CD4-positive, alpha-beta memory T cell (primary cell): ENCODE measurements at regions of chr14 and their contacts with region 1.

Region 1: DNA sequence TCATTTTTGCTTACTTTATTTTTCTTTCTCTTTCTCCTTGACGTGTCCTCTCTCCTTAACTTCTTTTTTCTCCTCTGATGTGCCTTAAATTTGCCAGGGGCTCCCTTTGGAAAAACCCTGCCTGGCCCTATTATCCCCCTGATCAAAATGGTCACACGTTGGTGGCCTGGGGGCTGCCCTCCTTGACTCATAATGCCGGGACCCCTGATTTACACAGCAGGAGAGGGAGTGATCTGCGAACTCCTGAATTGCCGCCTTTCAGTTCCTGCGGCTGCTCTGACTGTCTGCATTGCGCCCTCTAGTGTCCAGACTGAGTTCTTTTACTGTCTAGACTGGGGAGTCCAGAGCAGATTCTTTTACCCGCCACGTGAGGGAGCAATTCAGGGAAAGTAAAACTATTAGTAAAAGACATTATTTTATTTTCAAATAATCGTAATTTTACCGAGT is 44.8 kb upstream of the GZMB start:
- DNase-seq: peak; percentile 79 to 83 (median 81)
- H3K4me3 ChIP-seq: no peak overlapping the region
- H3K4me3 Mint-ChIP-seq: peak overlapping the region; percentile 71 to 91 (median 80)
- H3K27ac ChIP-seq: no peak overlapping the region
- H3K27ac Mint-ChIP-seq: peak overlapping the region; percentile 48 to 95 (median 79)
- H3K4me1 ChIP-seq: peaks cover 14% of the 10 kb centered on the region
- H3K4me1 Mint-ChIP-seq: peaks cover 22 to 50% (median 34%) of the 10 kb centered on the region in 4 donors
- H3K27me3 ChIP-seq: no peaks in the 10 kb centered on the region
- H3K27me3 Mint-ChIP-seq: peaks cover 1 to 8% of the 10 kb centered on the region in 2 donors

Region 2: GRCh38 chr14:24442273-24443052 is 236.4 kb before region 1 on chr14 and contains the start of gene SDR39U1:
- CTCF ChIA-PET with region 1: no interaction called
- POLR2A ChIA-PET with region 1: interaction called, 5 read pairs
- intact Hi-C with region 1: loop called (anchors 5 kb)
- DNase-seq: peak; percentile 95 to 99 (median 98)
- H3K4me3 ChIP-seq: peak within 1 kb of the TSS; percentile 73 to 85
- H3K4me3 Mint-ChIP-seq: peak within 1 kb of the TSS; percentile 87 to 97 (median 92)
- H3K27ac ChIP-seq: peak within 1 kb of the TSS; percentile 93
- H3K27ac Mint-ChIP-seq: peak within 1 kb of the TSS; percentile 93 to 99 (median 99)
- H3K4me1 ChIP-seq: peaks cover 27% of the 10 kb centered on the region
- H3K4me1 Mint-ChIP-seq: peaks cover 20 to 57% (median 41%) of the 10 kb centered on the region in 4 donors
- H3K27me3 ChIP-seq: no peaks in the 10 kb centered on the region
- H3K27me3 Mint-ChIP-seq: no peaks in the 10 kb centered on the region
- total RNA-seq, gene SDR39U1: 102 to 109 TPM

Region 3: GRCh38 chr14:24605435-24606190 is 73.2 kb before region 1 on chr14:
- CTCF ChIA-PET with region 1: interaction called, 31 read pairs
- POLR2A ChIA-PET with region 1: interaction called, 7 read pairs
- intact Hi-C with region 1: loop called (anchors 1 kb)
- DNase-seq: peak; percentile 41 to 51 (median 50)
- H3K4me3 ChIP-seq: no peak overlapping the region
- H3K4me3 Mint-ChIP-seq: peak overlapping the region in 2 of 8 donors; percentile 36 to 59
- H3K27ac ChIP-seq: no peak overlapping the region
- H3K27ac Mint-ChIP-seq: peak overlapping the region in 4 of 7 donors; percentile 35 to 64 (median 57)
- H3K4me1 ChIP-seq: peaks cover 19% of the 10 kb centered on the region
- H3K4me1 Mint-ChIP-seq: peaks cover 10 to 29% (median 17%) of the 10 kb centered on the region in 4 donors
- H3K27me3 ChIP-seq: peaks cover 4% of the 10 kb centered on the region
- H3K27me3 Mint-ChIP-seq: peaks cover 2 to 5% of the 10 kb centered on the region in 2 donors

Region 4: DNA sequence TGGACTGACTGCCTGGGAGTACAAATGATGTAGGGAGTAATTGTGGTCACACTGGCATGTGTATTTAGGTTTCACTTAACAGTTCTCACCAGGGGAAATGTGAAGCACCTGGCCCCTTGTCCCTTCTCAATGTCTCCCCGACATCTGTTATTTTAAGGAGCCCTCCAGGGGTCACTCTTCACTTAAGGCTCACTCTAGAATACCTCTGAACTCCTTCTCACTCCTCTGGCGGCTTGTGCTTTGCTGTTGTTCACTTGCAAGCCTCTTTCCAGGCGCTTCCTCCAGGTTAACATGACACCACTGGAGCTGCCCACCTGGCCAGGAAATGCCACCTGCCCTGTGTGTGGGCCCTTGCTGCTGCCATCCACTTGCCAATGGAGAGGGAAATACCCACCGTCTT is 11.7 kb after region 1 on chr14:
- CTCF ChIA-PET with region 1: interaction called, 17 read pairs
- POLR2A ChIA-PET with region 1: interaction called, 23 read pairs
- intact Hi-C with region 1: loop called (anchors 1 kb)
- DNase-seq: no peak
- H3K4me3 ChIP-seq: no peak overlapping the region
- H3K4me3 Mint-ChIP-seq: no peak overlapping the region
- H3K27ac ChIP-seq: no peak overlapping the region
- H3K27ac Mint-ChIP-seq: no peak overlapping the region
- H3K4me1 ChIP-seq: peaks cover 37% of the 10 kb centered on the region
- H3K4me1 Mint-ChIP-seq: peaks cover 11 to 17% (median 14%) of the 10 kb centered on the region in 4 donors
- H3K27me3 ChIP-seq: no peaks in the 10 kb centered on the region
- H3K27me3 Mint-ChIP-seq: no peaks in the 10 kb centered on the region

Region 5: GRCh38 chr14:24818058-24818822 is 139.4 kb after region 1 on chr14:
- CTCF ChIA-PET with region 1: no interaction called
- POLR2A ChIA-PET with region 1: no interaction called
- intact Hi-C with region 1: no loop called
- DNase-seq: no peak
- H3K4me3 ChIP-seq: no peak overlapping the region
- H3K4me3 Mint-ChIP-seq: no peak overlapping the region
- H3K27ac ChIP-seq: no peak overlapping the region
- H3K27ac Mint-ChIP-seq: no peak overlapping the region
- H3K4me1 ChIP-seq: no peaks in the 10 kb centered on the region
- H3K4me1 Mint-ChIP-seq: no peaks in the 10 kb centered on the region
- H3K27me3 ChIP-seq: no peaks in the 10 kb centered on the region
- H3K27me3 Mint-ChIP-seq: peaks cover 13 to 17% of the 10 kb centered on the region in 2 donors